ENCODE measurements at regions of chr2 and their contacts with region 1.

Region 1: GRCh38 chr2:191321861-191322686 is 76.9 kb downstream of the MYO1B start:
- DNase-seq: peak; percentile 57 to 90
- H3K4me3 ChIP-seq: no peak overlapping the region
- H3K27ac ChIP-seq: peak overlapping the region; percentile 76
- H3K4me1 ChIP-seq: peaks cover 52% of the 10 kb centered on the region
- H3K27me3 ChIP-seq: no peaks in the 10 kb centered on the region
- CTCF ChIP-seq: no peak

Region 2: DNA sequence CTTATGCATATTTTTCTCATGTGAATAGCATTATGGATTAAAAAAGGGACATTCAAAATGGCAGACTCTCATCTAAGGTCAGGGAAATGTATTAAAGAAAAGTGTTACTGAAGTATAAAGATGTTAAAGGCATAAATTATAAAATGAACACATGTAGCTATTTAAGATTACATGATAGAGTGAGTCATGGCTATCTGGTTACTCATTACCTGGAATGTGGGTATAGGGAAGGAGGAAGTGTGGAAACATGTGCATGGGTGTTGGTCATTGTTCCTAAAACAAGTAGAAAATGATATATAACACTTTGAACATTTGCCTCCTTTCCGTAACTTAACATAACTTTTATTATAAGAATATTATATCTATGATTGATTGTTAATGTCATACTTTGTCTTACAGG is 10.4 kb before region 1 on chr2:
- CTCF ChIA-PET with region 1: no interaction called
- POLR2A ChIA-PET with region 1: no interaction called
- intact Hi-C with region 1: loop called (anchors 1 kb)
- DNase-seq: peak in 1 of 2 experiments; percentile 78
- H3K4me3 ChIP-seq: no peak overlapping the region
- H3K27ac ChIP-seq: peak overlapping the region; percentile 59
- H3K4me1 ChIP-seq: peaks cover 20% of the 10 kb centered on the region
- H3K27me3 ChIP-seq: no peaks in the 10 kb centered on the region
- CTCF ChIP-seq: no peak

Region 3: GRCh38 chr2:191358318-191359025 is 36.4 kb after region 1 on chr2:
- CTCF ChIA-PET with region 1: no interaction called
- POLR2A ChIA-PET with region 1: no interaction called
- intact Hi-C with region 1: no loop called
- DNase-seq: peak; percentile 15 to 77
- H3K4me3 ChIP-seq: no peak overlapping the region
- H3K27ac ChIP-seq: no peak overlapping the region
- H3K4me1 ChIP-seq: no peaks in the 10 kb centered on the region
- H3K27me3 ChIP-seq: no peaks in the 10 kb centered on the region
- CTCF ChIP-seq: no peak

Measured in PC-9 (cell line).